Adrenal gland (tissue), 19 donors: ENCODE measurements at regions of chr11 and their contacts with region 1.

Region 1: DNA sequence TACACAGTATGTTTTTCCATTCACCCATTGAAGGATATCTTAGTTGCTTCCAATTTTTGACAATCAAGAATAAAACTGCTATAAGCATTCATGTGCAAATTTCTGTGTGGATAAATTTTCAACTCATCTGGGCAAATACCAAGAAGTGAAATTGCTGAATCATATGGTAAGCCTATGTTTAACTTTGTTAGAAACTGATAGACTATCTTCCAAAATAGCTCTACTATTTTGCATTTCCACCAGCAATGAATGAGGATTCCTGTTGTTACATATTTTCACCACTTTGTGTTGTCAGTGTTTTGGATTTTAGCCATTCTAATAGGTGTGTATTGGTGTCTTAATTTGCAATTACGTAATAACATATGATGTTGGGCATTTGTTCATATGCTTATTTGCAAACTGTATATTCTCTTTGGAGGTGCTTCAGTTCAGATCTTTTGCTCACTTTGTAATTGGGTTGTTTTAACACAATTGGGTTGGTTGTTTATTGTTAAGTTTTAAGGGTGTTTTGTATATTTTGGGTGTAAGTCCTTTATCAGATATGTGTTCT is 49.2 kb upstream of the FAM181B start:
- DNase-seq: no peak
- H3K4me3 ChIP-seq: no peak overlapping the region
- H3K27ac ChIP-seq: no peak overlapping the region
- H3K4me1 ChIP-seq: no peaks in the 10 kb centered on the region
- H3K27me3 ChIP-seq: no peaks in the 10 kb centered on the region
- CTCF ChIP-seq: no peak
- POLR2A ChIP-seq: no peak

Region 2: GRCh38 chr11:82796998-82797964 is 14.4 kb after region 1 on chr11:
- intact Hi-C with region 1: loop called in 1 of 2 experiments (anchors 2 kb)
- DNase-seq: peak in 6 of 7 donors; percentile 31 to 53 (median 38)
- H3K4me3 ChIP-seq: no peak overlapping the region
- H3K27ac ChIP-seq: peak overlapping the region in 1 of 5 donors; percentile 57
- H3K4me1 ChIP-seq: no peaks in the 10 kb centered on the region
- H3K27me3 ChIP-seq: no peaks in the 10 kb centered on the region
- CTCF ChIP-seq: no peak
- POLR2A ChIP-seq: no peak